MCF 10A (cell line): ENCODE measurements at regions of chr20 and their contacts with region 1.

Region 1: GRCh38 chr20:22691369-22692118 is 107.2 kb upstream of the FOXA2 start:
- DNase-seq: peak; percentile 74
- H3K4me3 Mint-ChIP-seq: no peak overlapping the region
- H3K27ac Mint-ChIP-seq: no peak overlapping the region
- H3K4me1 Mint-ChIP-seq: peaks cover 13% of the 10 kb centered on the region
- H3K27me3 Mint-ChIP-seq: no peaks in the 10 kb centered on the region
- CTCF ChIP-seq: peak; percentile 94

Region 2: GRCh38 chr20:22333885-22334545 is 357.5 kb before region 1 on chr20:
- CTCF ChIA-PET with region 1: interaction called, 549 read pairs
- POLR2A ChIA-PET with region 1: interaction called, 31 read pairs
- intact Hi-C with region 1: no loop called
- DNase-seq: peak; percentile 66
- H3K4me3 Mint-ChIP-seq: no peak overlapping the region
- H3K27ac Mint-ChIP-seq: no peak overlapping the region
- H3K4me1 Mint-ChIP-seq: peaks cover 10% of the 10 kb centered on the region
- H3K27me3 Mint-ChIP-seq: peaks cover 27% of the 10 kb centered on the region
- CTCF ChIP-seq: peak; percentile 78

Region 3: GRCh38 chr20:22523499-22524392 is 167.8 kb before region 1 on chr20:
- CTCF ChIA-PET with region 1: no interaction called
- POLR2A ChIA-PET with region 1: no interaction called
- intact Hi-C with region 1: no loop called
- DNase-seq: no peak
- H3K4me3 Mint-ChIP-seq: no peak overlapping the region
- H3K27ac Mint-ChIP-seq: no peak overlapping the region
- H3K4me1 Mint-ChIP-seq: peaks cover 3% of the 10 kb centered on the region
- H3K27me3 Mint-ChIP-seq: no peaks in the 10 kb centered on the region
- CTCF ChIP-seq: no peak

Region 4: DNA sequence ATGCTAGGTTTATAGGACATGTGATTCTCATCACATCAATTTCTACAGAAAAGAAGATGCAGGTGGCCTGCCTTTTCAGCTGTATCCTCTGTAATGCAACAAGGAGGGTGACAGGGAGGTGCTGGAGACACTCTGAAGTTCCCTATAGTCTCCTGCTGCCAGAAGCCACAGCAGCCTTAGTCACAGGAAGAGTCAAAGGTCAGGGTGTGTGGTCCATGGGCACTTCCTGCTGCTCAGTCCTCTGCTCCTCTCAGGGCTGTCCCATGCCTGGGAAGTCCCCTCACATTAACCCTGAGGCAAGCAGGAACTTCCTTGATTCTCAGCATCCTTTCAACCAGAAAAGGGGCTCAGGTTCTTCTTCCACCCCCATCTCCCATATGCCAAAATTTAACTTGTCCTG is 37.6 kb after region 1 on chr20:
- CTCF ChIA-PET with region 1: interaction called, 182 read pairs
- POLR2A ChIA-PET with region 1: no interaction called
- intact Hi-C with region 1: no loop called
- DNase-seq: no peak
- H3K4me3 Mint-ChIP-seq: no peak overlapping the region
- H3K27ac Mint-ChIP-seq: no peak overlapping the region
- H3K4me1 Mint-ChIP-seq: peaks cover 7% of the 10 kb centered on the region
- H3K27me3 Mint-ChIP-seq: no peaks in the 10 kb centered on the region
- CTCF ChIP-seq: no peak

Region 5: DNA sequence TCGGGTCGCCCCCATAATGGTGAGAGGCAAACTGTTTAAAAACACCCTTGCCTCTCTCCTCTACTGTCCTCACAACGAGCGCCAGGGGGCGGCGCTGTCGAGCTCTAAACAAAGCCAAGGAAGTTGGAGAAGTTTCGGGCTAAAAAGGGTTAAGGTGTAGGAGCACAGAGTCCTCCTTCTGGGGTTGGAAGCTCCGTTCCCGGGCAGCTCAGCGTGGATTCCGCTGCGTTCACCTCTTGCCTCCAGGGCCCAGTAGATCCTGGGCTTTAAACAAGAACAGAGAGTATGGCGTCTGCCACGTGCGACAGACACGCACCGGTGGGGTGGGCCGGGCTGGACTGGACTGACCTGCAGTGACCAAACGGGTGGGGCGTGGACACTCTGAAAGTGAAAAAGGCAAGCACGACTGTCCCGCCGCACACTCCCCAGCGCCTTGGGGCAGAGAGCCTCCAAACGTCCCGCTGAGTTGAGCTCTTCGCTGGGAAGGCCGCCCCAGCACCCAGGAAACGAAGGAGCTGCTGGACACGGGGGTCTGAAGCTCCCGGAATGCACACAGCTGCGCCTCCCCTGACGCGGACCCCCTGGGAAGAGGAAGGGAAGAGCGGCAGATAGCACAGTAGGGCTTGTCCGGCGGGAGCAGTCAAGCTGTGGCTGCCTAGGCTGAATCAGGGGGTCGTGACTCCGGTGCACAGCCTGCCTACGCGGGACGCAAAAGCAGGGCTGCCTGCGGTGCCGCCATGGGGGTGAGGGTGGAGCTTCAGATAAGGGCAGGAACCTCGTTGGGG is 359.5 kb after region 1 on chr20:
- CTCF ChIA-PET with region 1: interaction called, 11 read pairs
- POLR2A ChIA-PET with region 1: no interaction called
- intact Hi-C with region 1: loop called (anchors 2 kb)
- DNase-seq: peak; percentile 92
- H3K4me3 Mint-ChIP-seq: peak overlapping the region; percentile 74
- H3K27ac Mint-ChIP-seq: peak overlapping the region; percentile 92
- H3K4me1 Mint-ChIP-seq: peaks cover 17% of the 10 kb centered on the region
- H3K27me3 Mint-ChIP-seq: no peaks in the 10 kb centered on the region
- CTCF ChIP-seq: peak; percentile 78

Region 6: GRCh38 chr20:23147964-23148730 is 456.6 kb after region 1 on chr20:
- CTCF ChIA-PET with region 1: interaction called, 32 read pairs
- POLR2A ChIA-PET with region 1: no interaction called
- intact Hi-C with region 1: no loop called
- DNase-seq: peak; percentile 80
- H3K4me3 Mint-ChIP-seq: peak overlapping the region; percentile 28
- H3K27ac Mint-ChIP-seq: peak overlapping the region; percentile 89
- H3K4me1 Mint-ChIP-seq: peaks cover 55% of the 10 kb centered on the region
- H3K27me3 Mint-ChIP-seq: no peaks in the 10 kb centered on the region
- CTCF ChIP-seq: no peak

Region 7: DNA sequence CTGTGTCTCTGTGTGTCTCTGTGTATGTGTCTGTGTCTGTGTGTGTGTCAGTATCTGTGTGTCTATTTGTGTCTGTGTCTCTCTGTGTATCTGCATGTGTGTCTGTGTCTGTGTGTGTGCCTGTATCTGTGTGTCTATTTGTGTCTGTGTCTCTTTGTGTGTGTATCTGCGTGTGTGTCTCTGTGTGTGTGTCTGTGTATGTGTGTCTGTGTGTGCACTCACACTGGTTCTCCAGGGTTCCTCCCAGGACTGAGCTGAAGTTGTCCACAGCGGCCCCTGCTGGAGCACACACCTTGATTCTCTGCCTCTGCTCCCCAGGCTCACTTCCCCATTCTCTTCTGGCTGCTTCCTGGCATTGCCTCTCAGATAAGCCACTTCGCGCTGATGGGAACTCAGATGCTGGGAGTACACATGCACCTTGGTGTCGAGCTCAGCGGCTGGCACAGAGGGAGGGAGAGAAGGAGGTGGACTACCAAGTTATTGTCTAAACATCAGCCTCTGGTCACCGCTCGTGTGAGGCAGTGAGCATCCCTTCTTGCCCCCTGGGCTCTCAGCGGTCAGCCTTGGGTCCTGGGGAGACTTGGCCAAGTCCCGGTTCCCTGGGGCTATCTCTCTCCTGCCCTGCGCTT is 554.1 kb after region 1 on chr20:
- CTCF ChIA-PET with region 1: interaction called, 167 read pairs
- POLR2A ChIA-PET with region 1: interaction called, 3 read pairs
- intact Hi-C with region 1: no loop called
- DNase-seq: peak; percentile 43
- H3K4me3 Mint-ChIP-seq: no peak overlapping the region
- H3K27ac Mint-ChIP-seq: no peak overlapping the region
- H3K4me1 Mint-ChIP-seq: no peaks in the 10 kb centered on the region
- H3K27me3 Mint-ChIP-seq: no peaks in the 10 kb centered on the region
- CTCF ChIP-seq: peak; percentile 36

Region 8: DNA sequence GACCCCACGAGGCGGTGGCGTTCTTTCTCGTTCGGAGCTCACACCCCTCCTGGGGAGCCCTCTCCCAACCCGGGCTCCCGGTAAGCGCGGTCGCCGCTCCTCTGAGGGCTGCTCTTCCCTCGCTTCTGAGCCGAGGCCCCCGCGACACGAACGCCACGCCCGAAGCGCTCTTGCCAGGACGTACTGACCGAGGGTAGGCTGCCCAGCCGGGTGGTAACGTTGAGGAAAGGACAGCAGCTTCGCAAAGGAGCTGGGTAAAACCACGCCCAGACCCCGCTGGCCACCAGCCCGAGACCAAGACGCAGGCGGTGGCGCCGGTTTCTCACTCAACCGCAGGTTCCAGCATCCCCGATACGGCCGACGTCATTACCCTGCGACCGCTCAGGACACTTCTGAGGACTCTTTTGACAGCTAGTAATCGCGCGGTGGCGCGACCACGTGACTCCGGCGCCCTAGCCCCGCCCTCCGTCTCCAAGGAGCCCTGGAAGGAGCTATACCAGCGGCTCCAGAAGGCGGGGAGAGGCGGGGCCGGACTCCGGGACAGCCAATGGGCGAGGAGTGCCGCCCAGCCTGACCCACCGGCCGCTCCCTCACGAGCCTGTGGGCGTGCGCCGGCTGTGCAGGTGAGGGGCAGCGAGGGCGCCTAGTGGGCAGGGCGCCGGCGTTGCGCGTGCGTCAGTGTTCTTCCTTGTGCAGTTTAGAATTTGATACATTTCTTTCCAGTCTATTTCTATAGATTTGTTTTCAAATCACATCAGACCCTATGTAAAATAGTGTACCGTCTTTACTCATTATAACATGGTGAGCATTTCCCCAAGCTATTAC is 666.4 kb after region 1 on chr20:
- CTCF ChIA-PET with region 1: interaction called, 17 read pairs
- POLR2A ChIA-PET with region 1: interaction called, 5 read pairs
- intact Hi-C with region 1: no loop called
- DNase-seq: peak; percentile 99
- H3K4me3 Mint-ChIP-seq: peak overlapping the region; percentile 86
- H3K27ac Mint-ChIP-seq: peak overlapping the region; percentile 83
- H3K4me1 Mint-ChIP-seq: peaks cover 4% of the 10 kb centered on the region
- H3K27me3 Mint-ChIP-seq: no peaks in the 10 kb centered on the region
- CTCF ChIP-seq: no peak

Region 9: DNA sequence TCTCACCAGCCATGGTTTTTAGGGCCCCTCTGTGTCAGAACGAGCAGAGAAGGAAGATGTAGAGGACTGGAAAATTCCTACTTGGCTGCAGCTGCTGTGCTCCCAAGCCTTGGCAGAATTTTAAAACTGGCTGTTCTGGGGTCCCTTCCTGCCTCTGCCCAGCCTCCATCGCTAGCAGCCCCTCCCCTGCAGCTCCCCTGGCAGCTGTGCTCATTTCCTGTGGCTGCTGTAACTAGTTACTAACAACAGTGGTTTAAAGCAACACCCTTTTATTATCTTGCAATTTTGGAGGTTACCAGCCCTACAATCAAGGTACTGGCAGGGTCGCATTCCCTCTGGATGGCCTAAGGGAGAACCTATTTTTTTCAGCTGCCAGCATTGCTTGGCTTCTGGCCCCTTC is 764.9 kb after region 1 on chr20:
- CTCF ChIA-PET with region 1: no interaction called
- POLR2A ChIA-PET with region 1: no interaction called
- intact Hi-C with region 1: no loop called
- DNase-seq: no peak
- H3K4me3 Mint-ChIP-seq: no peak overlapping the region
- H3K27ac Mint-ChIP-seq: no peak overlapping the region
- H3K4me1 Mint-ChIP-seq: no peaks in the 10 kb centered on the region
- H3K27me3 Mint-ChIP-seq: no peaks in the 10 kb centered on the region
- CTCF ChIP-seq: no peak

Region 10: DNA sequence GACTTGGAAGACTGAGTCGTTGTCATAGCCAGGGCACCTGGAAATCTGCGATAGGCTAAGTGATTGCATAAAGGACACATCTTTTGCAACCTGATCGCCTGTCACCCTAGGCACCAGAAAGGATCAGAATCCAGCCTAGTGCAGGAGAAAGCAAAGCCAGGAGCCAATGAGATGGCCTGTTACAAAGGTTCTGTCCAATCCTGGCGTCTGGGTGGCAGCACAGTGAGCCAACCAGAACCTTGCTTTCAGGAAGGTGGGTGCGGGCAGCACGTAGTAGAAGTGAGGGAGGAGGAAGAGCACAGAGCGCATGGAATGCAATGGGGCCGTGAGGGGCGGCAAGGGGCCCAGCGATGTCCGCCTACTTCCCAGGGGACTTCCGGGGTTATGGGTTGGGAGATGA is 1417.5 kb after region 1 on chr20:
- CTCF ChIA-PET with region 1: no interaction called
- POLR2A ChIA-PET with region 1: no interaction called
- intact Hi-C with region 1: no loop called
- DNase-seq: no peak
- H3K4me3 Mint-ChIP-seq: no peak overlapping the region
- H3K27ac Mint-ChIP-seq: no peak overlapping the region
- H3K4me1 Mint-ChIP-seq: no peaks in the 10 kb centered on the region
- H3K27me3 Mint-ChIP-seq: no peaks in the 10 kb centered on the region
- CTCF ChIP-seq: no peak